ENCODE measurements at regions of chr1 and their contacts with region 1.

Region 1: GRCh38 chr1:36285448-36286101 is 20.6 kb upstream of the SH3D21 start:
- DNase-seq: peak; percentile 68
- H3K4me3 ChIP-seq: no peak overlapping the region
- H3K27ac ChIP-seq: no peak overlapping the region
- H3K4me1 ChIP-seq: no peaks in the 10 kb centered on the region
- H3K27me3 ChIP-seq: no peaks in the 10 kb centered on the region
- CTCF ChIP-seq: peak; percentile 60 to 70

Region 2: GRCh38 chr1:36088575-36089443 is 196.8 kb before region 1 on chr1 and contains the start of gene ADPRS:
- CTCF ChIA-PET with region 1: no interaction called
- dilution Hi-C with region 1: loop called (anchors 5 kb)
- in situ Hi-C with region 1: no loop called
- intact Hi-C with region 1: no loop called
- DNase-seq: peak; percentile 83
- H3K4me3 ChIP-seq: peak within 1 kb of the TSS; percentile 79 to 96 (median 89)
- H3K27ac ChIP-seq: peak within 1 kb of the TSS; percentile 74
- H3K4me1 ChIP-seq: peaks cover 22% of the 10 kb centered on the region
- H3K27me3 ChIP-seq: no peaks in the 10 kb centered on the region
- CTCF ChIP-seq: peak; percentile 86 to 99
- total RNA-seq, gene ADPRS: 33.7 to 34.3 TPM

Region 3: DNA sequence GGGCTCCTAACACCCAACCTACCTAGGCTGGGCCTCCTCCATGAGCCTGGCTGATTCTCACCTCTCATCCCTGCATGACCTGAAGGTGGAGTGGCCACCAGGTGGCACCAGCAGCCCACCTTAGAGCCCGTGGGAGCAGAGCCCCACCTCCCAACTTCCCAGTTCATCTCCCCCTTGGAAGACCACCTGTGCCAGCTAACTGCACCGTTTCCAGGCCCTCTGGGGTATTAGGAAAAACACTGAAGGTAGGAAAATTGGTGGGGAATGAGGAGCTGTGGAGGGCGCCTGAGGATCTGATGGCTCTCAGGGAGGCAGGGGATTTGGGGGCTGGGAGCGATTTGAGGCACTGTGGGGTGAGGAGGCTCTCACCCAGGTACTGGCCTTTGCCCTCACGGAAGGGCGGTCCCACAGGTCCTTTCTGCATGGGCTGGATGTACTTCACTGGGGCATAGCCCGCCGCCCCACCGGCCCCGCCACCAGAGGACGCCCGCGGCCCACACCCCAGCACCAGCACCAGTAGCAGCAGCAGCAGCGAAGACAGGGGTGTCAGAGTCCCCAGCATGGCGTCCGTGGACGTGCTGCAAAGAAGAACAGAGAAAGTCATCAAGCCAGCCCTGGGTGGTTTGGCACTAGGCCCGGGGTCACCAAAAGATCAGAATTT is 185.8 kb before region 1 on chr1:
- CTCF ChIA-PET with region 1: no interaction called
- dilution Hi-C with region 1: no loop called
- in situ Hi-C with region 1: loop called in 1 of 2 experiments (anchors 10 kb)
- intact Hi-C with region 1: loop called (anchors 1 kb)
- DNase-seq: peak; percentile 49
- H3K4me3 ChIP-seq: no peak overlapping the region
- H3K27ac ChIP-seq: no peak overlapping the region
- H3K4me1 ChIP-seq: peaks cover 4% of the 10 kb centered on the region
- H3K27me3 ChIP-seq: no peaks in the 10 kb centered on the region
- CTCF ChIP-seq: peak; percentile 86 to 96

Region 4: GRCh38 chr1:36134505-36135329 is 150.9 kb before region 1 on chr1:
- CTCF ChIA-PET with region 1: no interaction called
- dilution Hi-C with region 1: loop called (anchors 5 kb)
- in situ Hi-C with region 1: no loop called
- intact Hi-C with region 1: no loop called
- DNase-seq: peak; percentile 91
- H3K4me3 ChIP-seq: no peak overlapping the region
- H3K27ac ChIP-seq: peak overlapping the region; percentile 79
- H3K4me1 ChIP-seq: peaks cover 41% of the 10 kb centered on the region
- H3K27me3 ChIP-seq: no peaks in the 10 kb centered on the region
- CTCF ChIP-seq: peak; percentile 62 to 64

Region 5: GRCh38 chr1:36223993-36224536 is 61.5 kb before region 1 on chr1 and contains the start of gene THRAP3:
- CTCF ChIA-PET with region 1: no interaction called
- dilution Hi-C with region 1: loop called (anchors 5 kb)
- in situ Hi-C with region 1: no loop called
- intact Hi-C with region 1: loop called (anchors 10 kb)
- DNase-seq: peak; percentile 100
- H3K4me3 ChIP-seq: peak within 1 kb of the TSS; percentile 86 to 90 (median 89)
- H3K27ac ChIP-seq: peak within 1 kb of the TSS; percentile 98
- H3K4me1 ChIP-seq: peaks cover 8% of the 10 kb centered on the region
- H3K27me3 ChIP-seq: no peaks in the 10 kb centered on the region
- CTCF ChIP-seq: no peak
- total RNA-seq, gene THRAP3: 106 to 128 TPM

Region 6: DNA sequence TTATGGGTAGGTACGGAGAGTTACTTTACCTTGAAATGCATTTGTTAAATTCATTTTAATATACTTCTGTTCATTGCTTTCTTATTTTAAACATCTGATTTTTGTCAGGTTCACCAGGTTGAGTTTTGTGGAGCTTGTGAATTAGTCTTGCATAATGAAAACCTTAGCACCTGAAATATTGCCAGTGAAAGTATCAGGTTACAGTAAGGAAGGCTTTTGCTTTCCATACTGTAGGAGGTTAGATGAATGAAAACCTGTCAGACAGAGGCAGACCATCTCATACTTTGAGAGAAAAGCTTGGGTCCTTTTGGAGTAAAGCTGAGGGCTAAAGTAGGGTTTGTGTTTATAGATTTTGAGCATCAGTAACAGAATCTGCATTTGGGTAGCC is 26.6 kb before region 1 on chr1:
- CTCF ChIA-PET with region 1: no interaction called
- dilution Hi-C with region 1: no loop called
- in situ Hi-C with region 1: no loop called
- intact Hi-C with region 1: no loop called
- DNase-seq: peak; percentile 23
- H3K4me3 ChIP-seq: no peak overlapping the region
- H3K27ac ChIP-seq: peak overlapping the region; percentile 32
- H3K4me1 ChIP-seq: peaks cover 9% of the 10 kb centered on the region
- H3K27me3 ChIP-seq: no peaks in the 10 kb centered on the region
- CTCF ChIP-seq: no peak

Region 7: GRCh38 chr1:36385410-36386257 is 100.1 kb after region 1 on chr1 and contains the start of gene STK40:
- CTCF ChIA-PET with region 1: no interaction called
- dilution Hi-C with region 1: loop called (anchors 5 kb)
- in situ Hi-C with region 1: no loop called
- intact Hi-C with region 1: no loop called
- DNase-seq: peak; percentile 99
- H3K4me3 ChIP-seq: peak within 1 kb of the TSS; percentile 66 to 79 (median 70)
- H3K27ac ChIP-seq: peak within 1 kb of the TSS; percentile 100
- H3K4me1 ChIP-seq: peaks cover 31% of the 10 kb centered on the region
- H3K27me3 ChIP-seq: no peaks in the 10 kb centered on the region
- CTCF ChIP-seq: no peak
- total RNA-seq, gene STK40: 13.2 to 21.3 TPM